GM12878 (cell line): ENCODE measurements at regions of chr16 and their contacts with region 1.

Region 1: GRCh38 chr16:78122774-78123315 is 23.4 kb downstream of the WWOX start:
- DNase-seq: no peak
- ATAC-seq: peak; percentile 95
- H3K4me3 ChIP-seq: no peak overlapping the region
- H3K27ac ChIP-seq: no peak overlapping the region
- H3K4me1 ChIP-seq: no peaks in the 10 kb centered on the region; the same call in 1 of the 2 replicates
- H3K27me3 ChIP-seq: no peaks in the 10 kb centered on the region
- CTCF ChIP-seq: peak; percentile 8 to 51 (median 23); a peak in 3 of 6 replicates
- EP300 ChIP-seq: no peak
- POLR2A ChIP-seq: no peak
- RAD21 ChIP-seq: peak; percentile 52

Region 2: DNA sequence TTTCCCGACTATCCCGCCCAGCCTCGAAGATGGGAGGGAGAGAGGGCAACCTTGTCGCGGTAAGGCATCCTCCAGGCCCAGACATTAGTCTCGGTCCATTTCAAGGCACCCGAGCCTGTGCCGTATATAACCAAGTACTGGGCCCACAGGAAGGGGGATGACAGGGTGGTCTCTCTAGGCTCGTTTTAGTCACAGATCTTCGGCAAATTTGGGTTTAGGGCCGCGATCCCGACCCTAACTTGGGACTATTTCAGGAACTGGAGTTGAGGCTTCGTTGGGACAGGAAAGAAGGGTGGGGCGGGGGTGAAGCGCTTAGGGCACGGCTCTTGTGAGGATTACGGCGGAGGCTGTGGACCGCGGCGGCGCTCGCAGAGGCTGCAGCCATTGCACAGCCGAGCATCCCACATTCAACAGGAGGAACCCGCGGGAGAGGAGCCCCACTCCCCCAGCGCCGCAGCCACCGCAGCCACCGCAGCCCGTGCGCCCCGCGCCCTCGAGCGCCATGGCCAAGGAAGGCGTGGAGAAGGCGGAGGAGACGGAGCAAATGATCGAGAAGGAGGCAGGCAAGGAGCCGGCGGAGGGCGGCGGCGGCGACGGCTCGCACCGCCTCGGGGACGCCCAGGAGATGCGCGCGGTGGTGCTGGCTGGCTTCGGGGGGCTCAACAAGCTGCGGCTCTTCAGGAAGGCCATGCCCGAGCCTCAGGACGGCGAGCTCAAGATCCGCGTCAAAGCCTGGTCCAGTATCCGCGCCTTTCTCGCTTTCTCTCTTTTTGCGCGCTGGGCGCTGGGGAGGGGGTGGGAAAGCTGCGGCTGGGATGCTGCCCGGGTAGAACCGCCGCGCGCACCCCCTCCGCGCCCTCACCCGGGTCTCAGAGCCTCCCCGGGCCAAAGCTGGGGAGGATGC is 334.4 kb before region 1 on chr16 and contains the start of gene VAT1L:
- CTCF ChIA-PET with region 1: no interaction called
- POLR2A ChIA-PET with region 1: no interaction called
- RAD21 ChIA-PET with region 1: no interaction called
- SMC1A ChIA-PET with region 1: no interaction called
- in situ Hi-C with region 1: no loop called
- intact Hi-C with region 1: no loop called
- DNase-seq: no peak
- ATAC-seq: peak; percentile 47; the same call in 2 of the 3 replicates
- H3K4me3 ChIP-seq: no peak within 1 kb of the TSS
- H3K27ac ChIP-seq: no peak within 1 kb of the TSS
- H3K4me1 ChIP-seq: no peaks in the 10 kb centered on the region
- H3K27me3 ChIP-seq: peaks cover 7 to 20% of the 10 kb centered on the region in 2 experiments
- CTCF ChIP-seq: no peak
- EP300 ChIP-seq: no peak
- POLR2A ChIP-seq: no peak
- RAD21 ChIP-seq: no peak
- polyA plus RNA-seq, gene VAT1L: not detected

Region 3: DNA sequence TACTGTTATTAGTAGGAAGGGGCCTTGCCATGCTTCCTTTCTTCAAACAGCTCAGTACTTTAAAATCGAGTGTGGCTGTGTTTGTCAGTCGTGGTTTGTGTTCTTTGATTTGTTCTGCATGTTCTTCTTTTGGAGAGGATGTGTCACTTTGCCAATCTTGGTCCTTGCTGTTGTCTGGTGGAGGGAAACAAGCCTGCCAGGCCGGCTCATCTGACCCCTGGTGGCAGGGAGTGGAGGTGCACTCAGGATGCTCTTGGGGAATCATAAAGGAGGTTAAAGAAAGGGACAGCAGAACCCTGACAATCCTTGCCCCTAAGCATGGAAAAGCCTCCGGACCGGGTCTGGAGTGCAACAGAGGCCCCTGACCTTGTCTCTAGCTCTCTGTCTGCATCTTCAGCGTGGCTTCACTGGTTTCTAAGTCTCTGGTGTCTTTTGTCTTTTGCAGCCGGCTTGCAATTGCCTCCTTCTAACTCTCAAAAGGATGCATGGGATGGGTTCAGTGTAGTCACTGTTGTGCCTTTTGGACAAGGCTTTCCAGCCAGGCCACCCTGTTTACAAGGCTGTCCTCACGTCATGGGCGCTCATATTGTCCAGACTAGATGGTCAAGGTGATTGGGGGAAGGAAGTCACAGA is 112.4 kb after region 1 on chr16:
- CTCF ChIA-PET with region 1: interaction called, 34 read pairs
- POLR2A ChIA-PET with region 1: interaction called, 3 read pairs
- RAD21 ChIA-PET with region 1: no interaction called
- SMC1A ChIA-PET with region 1: interaction called, 4 read pairs
- in situ Hi-C with region 1: loop called (anchors 5 kb)
- intact Hi-C with region 1: loop called (anchors 1 kb)
- DNase-seq: peak; percentile 7
- ATAC-seq: peak; percentile 97
- H3K4me3 ChIP-seq: no peak overlapping the region
- H3K27ac ChIP-seq: no peak overlapping the region
- H3K4me1 ChIP-seq: no peaks in the 10 kb centered on the region
- H3K27me3 ChIP-seq: no peaks in the 10 kb centered on the region
- CTCF ChIP-seq: peak; percentile 79 to 96 (median 93)
- EP300 ChIP-seq: no peak
- POLR2A ChIP-seq: no peak
- RAD21 ChIP-seq: peak; percentile 66

Region 4: GRCh38 chr16:78437352-78437968 is 314.6 kb after region 1 on chr16:
- CTCF ChIA-PET with region 1: no interaction called
- POLR2A ChIA-PET with region 1: no interaction called
- RAD21 ChIA-PET with region 1: no interaction called
- SMC1A ChIA-PET with region 1: no interaction called
- in situ Hi-C with region 1: no loop called
- intact Hi-C with region 1: loop called (anchors 2 kb)
- DNase-seq: no peak
- ATAC-seq: peak; percentile 62
- H3K4me3 ChIP-seq: no peak overlapping the region
- H3K27ac ChIP-seq: no peak overlapping the region
- H3K4me1 ChIP-seq: no peaks in the 10 kb centered on the region
- H3K27me3 ChIP-seq: no peaks in the 10 kb centered on the region
- CTCF ChIP-seq: peak; percentile 64 to 91 (median 91)
- EP300 ChIP-seq: no peak
- POLR2A ChIP-seq: no peak
- RAD21 ChIP-seq: 0 out of 2 replicates have a peak, but pooled peaks have one; percentile 7